Activated CD4-positive, alpha-beta T cell treated with anti-CD3 and anti-CD28 coated beads, Interleukin-2, amount 10 ng/mL, durations not matched to agents 24 days and 14 days (primary cell): ENCODE measurements at regions of chr1 and their contacts with region 1.

Region 1: DNA sequence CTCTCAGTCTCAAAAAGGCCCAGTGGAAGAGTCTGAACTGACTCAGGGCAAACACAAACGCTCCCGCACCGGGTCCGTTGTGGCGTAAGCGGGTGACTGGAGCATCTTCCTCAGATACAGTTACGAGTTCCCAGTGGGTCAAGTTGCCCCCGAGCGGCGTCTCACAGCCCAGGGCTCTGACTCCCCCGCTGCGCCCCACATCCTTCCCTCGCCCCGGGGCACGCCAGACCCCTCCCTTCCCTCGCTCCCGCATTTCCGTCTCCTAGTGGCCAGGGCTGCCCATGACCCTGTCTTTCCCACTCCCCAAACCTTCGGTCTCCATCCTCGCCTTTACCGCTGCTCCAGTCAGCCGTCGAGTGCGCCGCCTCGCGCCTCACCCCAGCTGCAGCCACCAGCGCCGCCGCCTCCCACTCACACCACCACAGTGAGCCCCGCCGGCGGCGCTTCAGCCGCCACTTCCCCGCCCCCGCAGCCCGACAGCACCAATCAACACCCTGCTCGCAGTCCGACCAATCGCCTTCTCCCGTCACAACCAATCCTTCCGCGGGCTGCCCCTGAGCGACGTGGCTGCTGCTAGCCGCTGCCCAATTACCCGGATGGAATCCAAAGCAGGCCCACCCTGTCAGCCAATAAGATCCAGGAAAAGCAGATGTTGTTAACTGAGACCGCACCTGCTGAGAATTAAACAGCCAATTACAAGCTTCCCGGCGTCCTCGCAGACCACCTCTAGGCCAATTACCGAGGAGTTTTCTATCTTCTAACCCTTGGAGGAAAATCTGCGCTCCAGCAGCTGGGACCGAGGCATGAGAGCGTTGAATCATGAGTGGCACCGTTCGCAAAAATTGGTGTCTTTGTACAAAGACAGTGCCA is at the start of gene TDRKH:
- DNase-seq: peak; percentile 99
- H3K4me3 Mint-ChIP-seq: peak within 1 kb of the TSS; percentile 100
- H3K27ac Mint-ChIP-seq: peak within 1 kb of the TSS; percentile 90
- H3K4me1 Mint-ChIP-seq: peaks cover 25% of the 10 kb centered on the region
- H3K27me3 Mint-ChIP-seq: peaks cover 2% of the 10 kb centered on the region
- total RNA-seq, gene TDRKH: 12.7 and 13.3 TPM in 2 replicates

Region 2: GRCh38 chr1:151720974-151721787 is 69.1 kb before region 1 on chr1 and contains the start of gene RIIAD1:
- intact Hi-C with region 1: loop called (anchors 1 kb)
- DNase-seq: peak; percentile 82
- H3K4me3 Mint-ChIP-seq: peak within 1 kb of the TSS; percentile 85
- H3K27ac Mint-ChIP-seq: no peak within 1 kb of the TSS
- H3K4me1 Mint-ChIP-seq: peaks cover 24% of the 10 kb centered on the region
- H3K27me3 Mint-ChIP-seq: peaks cover 78% of the 10 kb centered on the region
- total RNA-seq, gene RIIAD1: not detected in 2 replicates

Region 3: GRCh38 chr1:151762941-151763921 is 27.1 kb before region 1 on chr1 and contains the start of gene MRPL9:
- intact Hi-C with region 1: loop called (anchors 1 kb)
- DNase-seq: peak; percentile 96
- H3K4me3 Mint-ChIP-seq: peak within 1 kb of the TSS; percentile 91
- H3K27ac Mint-ChIP-seq: peak within 1 kb of the TSS; percentile 90
- H3K4me1 Mint-ChIP-seq: peaks cover 22% of the 10 kb centered on the region
- H3K27me3 Mint-ChIP-seq: no peaks in the 10 kb centered on the region
- total RNA-seq, gene MRPL9: 136 TPM in 2 replicates

Region 4: GRCh38 chr1:151822404-151822803 is 32.1 kb after region 1 on chr1:
- intact Hi-C with region 1: loop called (anchors 2 kb)
- DNase-seq: peak; percentile 68
- H3K4me3 Mint-ChIP-seq: peak overlapping the region; percentile 42
- H3K27ac Mint-ChIP-seq: peak overlapping the region; percentile 72
- H3K4me1 Mint-ChIP-seq: peaks cover 49% of the 10 kb centered on the region
- H3K27me3 Mint-ChIP-seq: no peaks in the 10 kb centered on the region

Region 5: DNA sequence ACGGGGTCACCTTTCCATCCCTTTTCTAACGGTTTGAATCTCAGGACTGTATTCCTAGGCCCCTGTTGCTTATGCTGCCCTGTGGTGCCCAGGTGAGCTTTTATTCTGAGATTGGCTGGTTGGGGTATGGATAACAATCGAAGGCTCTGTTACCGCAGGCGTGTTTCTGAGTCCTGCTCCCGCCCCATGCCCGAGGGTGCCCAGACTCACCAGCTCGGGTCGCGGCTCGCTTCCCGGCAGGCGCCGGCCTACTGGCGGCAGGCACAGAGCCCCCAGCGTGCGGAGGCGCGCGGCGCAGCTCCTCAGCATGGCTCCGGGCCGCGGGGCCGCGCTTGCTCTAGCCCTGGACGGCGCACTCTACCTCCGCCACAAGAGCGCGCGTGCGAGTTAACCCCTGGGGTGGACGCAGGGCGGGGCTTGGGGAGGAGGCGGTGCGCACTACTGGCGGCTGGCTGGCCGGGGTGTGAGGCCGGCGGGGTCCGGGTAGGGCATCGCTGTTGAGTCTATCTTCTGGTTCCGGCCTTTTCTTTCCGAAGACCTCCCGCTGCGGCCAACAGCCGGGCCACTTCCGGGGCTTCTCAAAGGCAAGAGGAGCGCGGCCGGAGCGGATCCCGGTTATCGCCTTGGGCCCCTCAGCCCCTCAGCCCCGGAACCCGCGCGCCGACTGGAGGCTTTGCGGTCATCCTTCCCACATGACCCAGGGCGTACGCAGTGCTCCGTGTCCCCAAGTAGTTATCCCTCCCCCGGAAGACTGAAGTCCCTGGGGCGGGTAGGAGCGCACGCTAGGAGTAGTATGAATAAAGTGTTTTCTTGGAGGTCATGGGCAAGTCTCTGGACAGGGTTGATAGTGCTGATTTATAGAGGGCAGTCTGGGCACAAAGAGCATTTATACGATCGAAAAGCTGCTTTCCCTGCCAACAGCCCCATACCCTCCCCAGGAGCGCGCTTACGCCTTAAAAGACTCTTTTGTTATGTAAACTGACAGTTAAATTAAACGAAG is 119.1 kb after region 1 on chr1 and contains the start of gene THEM4:
- intact Hi-C with region 1: loop called (anchors 2 kb)
- DNase-seq: peak; percentile 97
- H3K4me3 Mint-ChIP-seq: peak within 1 kb of the TSS; percentile 91
- H3K27ac Mint-ChIP-seq: peak within 1 kb of the TSS; percentile 93
- H3K4me1 Mint-ChIP-seq: peaks cover 25% of the 10 kb centered on the region
- H3K27me3 Mint-ChIP-seq: peaks cover 2% of the 10 kb centered on the region
- total RNA-seq, gene THEM4: 26.9 and 30.6 TPM in 2 replicates